Astrocyte of the cerebellum (primary cell): ENCODE measurements at regions of chr5 and their contacts with region 1.

Region 1: GRCh38 chr5:65624571-65625555 is at the starts of genes SHLD3 and TRAPPC13:
- DNase-seq: peak; percentile 68
- H3K4me3 ChIP-seq: peak within 1 kb of the TSS; percentile 85
- CTCF ChIP-seq: no peak

Region 2: DNA sequence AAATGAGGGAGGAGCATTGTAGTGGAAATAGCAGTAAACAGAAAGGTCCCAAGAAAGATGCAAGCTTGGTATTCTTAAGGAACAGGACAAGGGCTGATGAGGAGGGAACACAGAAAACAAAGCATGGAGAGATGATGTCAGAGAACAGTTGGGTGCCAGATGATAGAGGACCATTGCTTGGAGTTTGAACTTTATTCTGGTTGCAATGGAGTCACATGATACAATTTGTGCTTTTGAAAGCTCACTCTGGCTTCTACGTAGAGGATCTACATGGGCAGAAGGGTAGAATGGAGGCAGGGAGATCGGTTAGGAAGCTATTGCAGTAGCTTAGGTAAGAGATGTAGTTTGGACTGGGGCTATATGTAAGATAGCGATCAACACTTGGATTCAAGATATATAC is 57.3 kb after region 1 on chr5:
- in situ Hi-C with region 1: loop called (anchors 5 kb)
- DNase-seq: no peak
- H3K4me3 ChIP-seq: no peak overlapping the region
- CTCF ChIP-seq: no peak